AG04450 (cell line): ENCODE measurements at regions of chr18 and their contacts with region 1.

Region 1: DNA sequence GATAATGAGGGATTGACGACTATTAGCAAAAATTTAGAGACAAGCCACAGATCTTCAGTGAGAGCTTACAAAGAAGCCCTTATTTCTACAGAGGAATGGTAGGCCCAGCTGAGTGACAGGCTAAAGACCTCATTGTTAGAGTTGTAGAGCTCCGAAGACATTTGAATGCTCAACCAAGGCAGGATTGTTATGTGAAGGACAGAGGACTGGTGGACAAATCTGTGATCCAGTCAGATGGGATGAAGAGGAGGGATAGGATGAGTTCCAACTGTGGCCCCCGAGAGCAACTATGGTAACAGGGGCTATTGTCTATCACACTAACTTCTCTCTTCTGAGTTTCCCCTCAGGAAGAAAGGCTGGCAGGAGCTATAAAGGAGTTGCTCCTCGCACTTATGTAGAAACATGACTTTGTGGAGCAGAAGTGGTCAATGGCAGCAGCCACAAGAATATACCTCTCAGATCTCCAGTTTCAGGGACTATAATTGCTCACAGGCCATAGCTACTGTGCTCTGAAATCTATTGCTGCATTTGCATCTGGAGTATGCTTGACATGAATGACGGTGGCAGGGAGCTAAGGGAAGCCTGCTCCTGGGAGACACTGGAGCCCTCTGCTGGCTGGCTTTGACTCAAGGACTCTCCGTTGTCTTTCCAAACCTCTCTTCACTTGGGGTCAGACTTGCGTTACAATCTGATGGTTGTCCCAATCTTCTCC is 50.3 kb upstream of the GREB1L start:
- DNase-seq: peak; percentile 30
- H3K4me3 ChIP-seq: no peak overlapping the region
- H3K27ac ChIP-seq: no peak overlapping the region
- H3K27me3 ChIP-seq: no peaks in the 10 kb centered on the region
- CTCF ChIP-seq: peak; percentile 84

Region 2: DNA sequence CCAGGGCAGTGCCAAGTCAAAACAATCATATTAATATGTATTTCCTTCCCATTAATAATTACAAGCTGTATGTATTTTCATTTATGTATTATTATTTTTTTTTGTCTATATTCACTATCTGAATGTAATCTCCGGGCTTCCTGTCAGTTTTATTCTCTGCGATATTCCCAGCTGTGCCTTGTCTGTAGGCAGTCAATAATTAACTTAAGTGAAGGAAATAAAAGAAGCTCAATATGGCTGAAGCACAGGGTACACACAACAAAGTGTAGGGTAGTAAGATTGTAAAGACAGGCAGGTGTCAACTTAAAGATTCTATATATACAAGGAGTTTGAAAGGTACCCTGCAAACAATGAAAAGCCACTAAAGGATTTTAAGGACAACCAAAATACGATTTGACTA is 203.0 kb before region 1 on chr18:
- CTCF ChIA-PET with region 1: interaction called, 10 read pairs
- POLR2A ChIA-PET with region 1: no interaction called
- DNase-seq: no peak
- H3K4me3 ChIP-seq: no peak overlapping the region
- H3K27ac ChIP-seq: no peak overlapping the region
- H3K27me3 ChIP-seq: no peaks in the 10 kb centered on the region
- CTCF ChIP-seq: no peak

Region 3: DNA sequence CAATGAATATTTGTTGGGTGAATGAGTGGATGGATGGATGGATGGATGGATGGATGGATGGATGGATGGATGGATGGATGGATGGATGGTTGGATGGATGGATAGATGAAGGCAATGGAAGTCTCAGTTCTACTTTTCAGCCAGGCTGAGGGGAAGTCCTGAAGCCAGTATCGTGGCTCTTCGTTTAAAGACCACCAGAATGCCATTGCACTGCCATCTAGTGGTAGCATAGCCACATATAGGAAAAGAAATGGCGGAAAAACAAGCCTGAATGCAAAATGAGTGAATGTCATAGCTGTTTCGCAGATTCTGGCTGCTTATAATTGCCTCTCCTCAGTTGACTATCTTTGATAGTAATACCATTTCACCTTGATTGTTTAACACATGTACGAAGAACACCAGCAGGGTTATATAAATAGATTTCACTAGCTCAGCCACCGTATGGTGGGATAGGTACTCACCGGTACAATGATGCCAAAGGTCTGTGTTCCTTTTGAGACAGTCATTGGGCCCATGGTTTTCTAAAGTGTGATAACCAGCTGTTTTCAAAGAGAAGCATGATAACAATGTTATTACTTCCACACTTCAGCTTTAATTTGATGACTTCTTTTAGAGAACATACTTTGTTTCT is 12.0 kb before region 1 on chr18:
- CTCF ChIA-PET with region 1: interaction called, 24 read pairs
- POLR2A ChIA-PET with region 1: interaction called, 3 read pairs
- DNase-seq: peak; percentile 45
- H3K4me3 ChIP-seq: no peak overlapping the region
- H3K27ac ChIP-seq: no peak overlapping the region
- H3K27me3 ChIP-seq: no peaks in the 10 kb centered on the region
- CTCF ChIP-seq: peak; percentile 91

Region 4: DNA sequence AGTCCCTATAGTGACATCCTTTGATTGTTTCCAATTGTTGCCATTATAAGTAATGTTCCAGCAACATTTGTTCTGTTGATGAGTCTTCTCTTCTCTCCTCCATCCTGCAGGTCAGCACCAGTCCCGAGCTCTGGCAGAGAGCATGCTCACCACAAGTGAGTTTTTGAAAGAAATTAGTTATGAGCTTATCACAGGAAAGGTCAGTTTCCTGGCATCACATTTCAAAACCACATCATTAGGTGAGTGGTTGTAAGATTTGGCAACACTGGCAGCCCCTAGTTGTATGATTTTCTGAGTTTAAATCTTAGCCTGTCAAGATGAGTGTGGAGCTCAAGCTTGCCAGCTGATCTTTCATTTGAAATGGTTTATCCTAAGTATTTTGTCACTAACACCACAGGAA is 259.2 kb after region 1 on chr18:
- CTCF ChIA-PET with region 1: interaction called, 177 read pairs
- POLR2A ChIA-PET with region 1: no interaction called
- DNase-seq: no peak
- H3K4me3 ChIP-seq: no peak overlapping the region
- H3K27ac ChIP-seq: no peak overlapping the region
- H3K27me3 ChIP-seq: peaks cover 12% of the 10 kb centered on the region
- CTCF ChIP-seq: no peak

Region 5: DNA sequence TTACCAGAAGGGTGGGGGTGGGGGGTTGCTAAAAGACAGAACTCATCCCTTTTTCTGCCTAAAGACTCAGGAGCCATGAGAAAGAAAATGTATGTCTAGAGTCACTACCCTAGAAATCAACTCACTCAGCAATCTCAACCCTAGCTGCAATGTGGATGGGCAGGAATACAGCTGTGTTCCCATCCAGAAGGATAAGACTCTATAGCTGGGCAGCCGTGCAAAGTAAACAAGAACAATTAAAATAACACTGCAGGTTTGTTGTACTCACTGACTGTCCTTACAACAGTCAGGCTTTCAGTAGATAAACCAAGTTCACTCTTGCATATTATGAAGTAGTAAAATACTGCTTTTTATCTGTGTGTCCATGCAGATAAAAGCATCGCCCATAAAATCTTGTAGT is 334.7 kb after region 1 on chr18:
- CTCF ChIA-PET with region 1: interaction called, 11 read pairs
- POLR2A ChIA-PET with region 1: no interaction called
- DNase-seq: no peak
- H3K4me3 ChIP-seq: no peak overlapping the region
- H3K27ac ChIP-seq: no peak overlapping the region
- H3K27me3 ChIP-seq: no peaks in the 10 kb centered on the region
- CTCF ChIP-seq: no peak

Region 6: GRCh38 chr18:21955757-21956652 is 764.3 kb after region 1 on chr18:
- CTCF ChIA-PET with region 1: interaction called, 10 read pairs
- POLR2A ChIA-PET with region 1: no interaction called
- DNase-seq: peak; percentile 33
- H3K4me3 ChIP-seq: no peak overlapping the region
- H3K27ac ChIP-seq: no peak overlapping the region
- H3K27me3 ChIP-seq: peaks cover 9% of the 10 kb centered on the region
- CTCF ChIP-seq: peak; percentile 96